B cell (primary cell): ENCODE measurements at regions of chr12 and their contacts with region 1.

Region 1: GRCh38 chr12:96906849-96907670 is at the start of gene NEDD1:
- DNase-seq: peak; percentile 89
- ATAC-seq: peak; percentile 85
- H3K4me3 ChIP-seq: peak within 1 kb of the TSS; percentile 82 to 98 (median 94)
- H3K4me3 Mint-ChIP-seq: peak within 1 kb of the TSS; percentile 97
- H3K27ac ChIP-seq: peak within 1 kb of the TSS; percentile 91 to 96
- H3K27ac Mint-ChIP-seq: peak within 1 kb of the TSS; percentile 97
- H3K4me1 ChIP-seq: peaks cover 17 to 21% of the 10 kb centered on the region in 2 donors
- H3K4me1 Mint-ChIP-seq: peaks cover 42% of the 10 kb centered on the region
- H3K27me3 ChIP-seq: no peaks in the 10 kb centered on the region
- H3K27me3 Mint-ChIP-seq: no peaks in the 10 kb centered on the region
- CTCF ChIP-seq: no peak
- total RNA-seq, gene NEDD1: 16.8 and 20.3 TPM in 2 replicates

Region 2: DNA sequence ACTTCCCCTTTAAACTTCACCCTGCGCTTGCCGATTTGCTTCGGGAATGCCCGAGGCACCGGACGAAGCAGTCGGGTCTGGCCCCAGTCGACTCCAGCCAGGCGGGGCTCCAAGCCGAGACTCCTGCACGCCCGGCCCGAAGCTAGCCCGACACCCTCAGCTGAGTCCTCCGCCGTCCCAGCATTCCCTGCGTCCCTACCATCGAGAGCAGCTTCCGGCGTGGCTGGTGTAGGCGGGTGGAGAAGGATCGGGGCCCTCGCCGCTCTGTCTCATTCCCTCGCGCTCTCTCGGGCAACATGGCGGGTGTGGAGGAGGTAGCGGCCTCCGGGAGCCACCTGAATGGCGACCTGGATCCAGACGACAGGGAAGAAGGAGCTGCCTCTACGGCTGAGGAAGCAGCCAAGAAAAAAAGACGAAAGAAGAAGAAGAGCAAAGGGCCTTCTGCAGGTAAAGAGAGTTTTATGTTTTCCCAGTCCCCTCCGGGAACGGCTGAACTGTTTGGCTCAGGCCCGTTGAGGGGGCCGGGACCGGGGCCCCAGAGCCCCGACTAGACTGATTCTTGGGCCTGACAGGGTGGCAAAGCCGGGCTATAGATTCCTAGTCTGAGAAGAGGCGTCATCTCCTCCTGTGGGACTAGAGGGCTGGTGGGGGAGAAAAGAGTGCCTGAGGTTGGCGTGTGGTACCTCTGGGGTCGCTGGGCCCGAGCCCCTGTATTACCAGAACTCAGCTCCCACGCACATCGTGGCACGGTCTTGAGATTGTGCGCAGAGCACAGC is 1433.0 kb before region 1 on chr12 and contains the start of gene METAP2:
- CTCF ChIA-PET with region 1: no interaction called
- POLR2A ChIA-PET with region 1: no interaction called
- intact Hi-C with region 1: loop called (anchors 5 kb)
- DNase-seq: peak; percentile 92
- ATAC-seq: peak; percentile 97
- H3K4me3 ChIP-seq: peak within 1 kb of the TSS; percentile 71 to 98 (median 90)
- H3K4me3 Mint-ChIP-seq: peak within 1 kb of the TSS; percentile 100
- H3K27ac ChIP-seq: peak within 1 kb of the TSS; percentile 73 to 94
- H3K27ac Mint-ChIP-seq: peak within 1 kb of the TSS; percentile 99
- H3K4me1 ChIP-seq: peaks cover 16 to 17% of the 10 kb centered on the region in 2 donors
- H3K4me1 Mint-ChIP-seq: peaks cover 47% of the 10 kb centered on the region
- H3K27me3 ChIP-seq: no peaks in the 10 kb centered on the region
- H3K27me3 Mint-ChIP-seq: peaks cover 6% of the 10 kb centered on the region
- CTCF ChIP-seq: no peak
- total RNA-seq, gene METAP2: 49.9 and 64.5 TPM in 2 replicates

Region 3: GRCh38 chr12:96208801-96209549 is 698.1 kb before region 1 on chr12:
- CTCF ChIA-PET with region 1: no interaction called
- POLR2A ChIA-PET with region 1: no interaction called
- intact Hi-C with region 1: loop called (anchors 10 kb)
- DNase-seq: peak; percentile 81
- ATAC-seq: peak; percentile 87
- H3K4me3 ChIP-seq: peak overlapping the region in 1 of 5 experiments; percentile 34
- H3K4me3 Mint-ChIP-seq: peak overlapping the region; percentile 81
- H3K27ac ChIP-seq: peak overlapping the region; percentile 46 to 68
- H3K27ac Mint-ChIP-seq: peak overlapping the region; percentile 90
- H3K4me1 ChIP-seq: peaks cover 95 to 98% of the 10 kb centered on the region in 2 donors
- H3K4me1 Mint-ChIP-seq: peaks cover 91% of the 10 kb centered on the region
- H3K27me3 ChIP-seq: no peaks in the 10 kb centered on the region
- H3K27me3 Mint-ChIP-seq: no peaks in the 10 kb centered on the region
- CTCF ChIP-seq: no peak